ENCODE measurements at regions of chr1 and their contacts with region 1.

Region 1: GRCh38 chr1:30779294-30780071 is 21.9 kb upstream of the LAPTM5 start:
- DNase-seq: no peak
- H3K4me3 ChIP-seq: no peak overlapping the region
- H3K27ac ChIP-seq: no peak overlapping the region
- H3K27me3 ChIP-seq: peaks cover 3% of the 10 kb centered on the region
- CTCF ChIP-seq: peak; percentile 89

Region 2: GRCh38 chr1:30718636-30719405 is 60.7 kb before region 1 on chr1:
- CTCF ChIA-PET with region 1: interaction called, 516 read pairs
- POLR2A ChIA-PET with region 1: interaction called, 31 read pairs
- DNase-seq: peak; percentile 95
- H3K4me3 ChIP-seq: peak overlapping the region; percentile 66
- H3K27ac ChIP-seq: peak overlapping the region; percentile 99
- H3K27me3 ChIP-seq: no peaks in the 10 kb centered on the region
- CTCF ChIP-seq: peak; percentile 84

Region 3: GRCh38 chr1:30748098-30748698 is 31.3 kb before region 1 on chr1:
- CTCF ChIA-PET with region 1: interaction called, 17 read pairs
- POLR2A ChIA-PET with region 1: no interaction called
- DNase-seq: no peak
- H3K4me3 ChIP-seq: no peak overlapping the region
- H3K27ac ChIP-seq: no peak overlapping the region
- H3K27me3 ChIP-seq: peaks cover 6% of the 10 kb centered on the region
- CTCF ChIP-seq: no peak

Region 4: GRCh38 chr1:30763651-30764248 is 15.7 kb before region 1 on chr1:
- CTCF ChIA-PET with region 1: interaction called, 31 read pairs
- POLR2A ChIA-PET with region 1: no interaction called
- DNase-seq: no peak
- H3K4me3 ChIP-seq: no peak overlapping the region
- H3K27ac ChIP-seq: no peak overlapping the region
- H3K27me3 ChIP-seq: peaks cover 5% of the 10 kb centered on the region
- CTCF ChIP-seq: no peak

Region 5: GRCh38 chr1:30911046-30911954 is 131.8 kb after region 1 on chr1:
- CTCF ChIA-PET with region 1: interaction called, 257 read pairs
- POLR2A ChIA-PET with region 1: no interaction called
- DNase-seq: peak; percentile 68
- H3K4me3 ChIP-seq: no peak overlapping the region
- H3K27ac ChIP-seq: no peak overlapping the region
- H3K27me3 ChIP-seq: no peaks in the 10 kb centered on the region
- CTCF ChIP-seq: peak; percentile 87

Region 6: GRCh38 chr1:30929135-30929889 is 149.8 kb after region 1 on chr1:
- CTCF ChIA-PET with region 1: interaction called, 36 read pairs
- POLR2A ChIA-PET with region 1: no interaction called
- DNase-seq: no peak
- H3K4me3 ChIP-seq: no peak overlapping the region
- H3K27ac ChIP-seq: no peak overlapping the region
- H3K27me3 ChIP-seq: no peaks in the 10 kb centered on the region
- CTCF ChIP-seq: peak; percentile 77

Measured in AG04450 (cell line).